Activated naive CD8-positive, alpha-beta T cell treated with anti-CD3 and anti-CD28 coated beads, Interleukin-2, amount 10 ng/mL, durations not matched to agents 7 days and 5 days (primary cell): ENCODE measurements at regions of chr3 and their contacts with region 1.

Region 1: GRCh38 chr3:112990672-112991602 is at the start of gene GTPBP8:
- DNase-seq: peak; percentile 86
- ATAC-seq: peak; percentile 94
- H3K4me3 Mint-ChIP-seq: peak within 1 kb of the TSS; percentile 94
- H3K27ac Mint-ChIP-seq: peak within 1 kb of the TSS; percentile 98
- H3K4me1 Mint-ChIP-seq: peaks cover 46% of the 10 kb centered on the region
- H3K27me3 Mint-ChIP-seq: peaks cover 1% of the 10 kb centered on the region
- total RNA-seq, gene GTPBP8: 26.5 to 26.6 TPM

Region 2: GRCh38 chr3:112973325-112974177 is 17.4 kb before region 1 on chr3:
- POLR2A ChIA-PET with region 1: interaction called, 12 read pairs
- DNase-seq: no peak
- ATAC-seq: peak; percentile 80
- H3K4me3 Mint-ChIP-seq: peak overlapping the region; percentile 91
- H3K27ac Mint-ChIP-seq: peak overlapping the region; percentile 92
- H3K4me1 Mint-ChIP-seq: peaks cover 40% of the 10 kb centered on the region
- H3K27me3 Mint-ChIP-seq: no peaks in the 10 kb centered on the region

Region 3: DNA sequence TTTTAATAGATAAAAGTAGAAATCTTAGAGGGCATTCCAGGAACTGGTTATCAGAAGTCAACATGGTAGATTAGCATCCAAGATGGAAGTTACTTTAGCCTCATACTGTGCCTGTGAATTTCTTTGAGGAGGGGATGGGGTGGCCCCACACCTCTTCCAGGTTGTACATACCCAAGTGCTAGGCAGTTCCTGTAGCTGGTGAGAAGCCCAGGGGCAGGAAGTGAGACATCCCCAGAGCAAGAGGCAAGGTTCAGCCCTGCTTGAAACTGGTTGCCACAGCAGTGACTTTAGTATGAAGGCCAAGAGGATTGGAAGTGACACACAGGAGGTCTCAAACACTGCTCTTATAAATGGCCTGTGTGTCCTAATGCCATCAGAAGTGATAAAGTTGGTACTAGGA is 11.7 kb after region 1 on chr3:
- POLR2A ChIA-PET with region 1: interaction called, 21 read pairs
- DNase-seq: peak; percentile 33
- ATAC-seq: peak; percentile 91
- H3K4me3 Mint-ChIP-seq: peak overlapping the region; percentile 22
- H3K27ac Mint-ChIP-seq: peak overlapping the region; percentile 85
- H3K4me1 Mint-ChIP-seq: peaks cover 59% of the 10 kb centered on the region
- H3K27me3 Mint-ChIP-seq: no peaks in the 10 kb centered on the region

Region 4: DNA sequence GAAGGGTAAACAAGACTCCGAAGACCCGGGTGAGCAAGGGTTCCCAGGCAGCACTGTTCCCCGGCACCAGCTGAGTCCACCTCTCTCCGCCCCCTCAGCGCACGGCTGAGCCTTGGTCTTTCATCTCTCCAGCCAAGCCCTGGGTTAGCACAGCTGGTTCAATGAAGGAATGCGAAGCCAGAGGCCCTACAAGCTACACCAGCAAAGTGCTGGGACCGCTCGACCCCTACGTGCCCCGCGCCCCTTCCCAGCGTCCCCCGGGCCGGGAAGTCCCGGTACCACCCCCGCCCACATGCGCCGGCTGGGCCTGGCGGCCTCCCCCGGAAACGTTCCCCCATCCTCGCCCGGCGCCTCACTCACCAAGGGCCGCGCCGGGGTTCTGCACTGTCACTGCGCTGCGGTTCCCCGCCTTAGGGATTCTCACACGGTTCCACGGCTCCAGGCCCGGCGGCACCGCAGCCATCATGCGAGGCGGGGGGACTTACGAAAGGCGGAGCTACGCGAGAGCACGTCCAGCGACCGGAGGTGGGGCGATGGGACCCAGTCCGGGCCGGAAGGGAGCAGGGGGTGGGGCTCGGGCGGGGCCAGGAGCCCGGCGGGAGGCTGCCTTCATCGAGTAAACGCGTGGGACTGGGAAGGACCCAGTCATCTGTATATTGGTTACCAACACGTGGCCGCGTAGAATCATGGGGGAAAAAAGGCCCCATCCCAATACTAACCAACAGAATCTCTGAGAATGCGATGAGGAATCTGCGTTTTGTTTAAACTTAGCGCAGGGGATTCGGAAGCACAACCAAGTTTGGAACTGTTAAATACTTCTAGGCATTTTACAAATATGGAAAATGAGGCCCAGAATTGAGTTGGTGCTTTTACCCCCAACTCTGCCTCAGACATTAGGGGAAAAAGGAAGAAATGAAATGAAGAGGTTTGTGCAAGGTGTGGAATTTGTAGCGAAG is 28.5 kb after region 1 on chr3:
- POLR2A ChIA-PET with region 1: interaction called, 20 read pairs
- DNase-seq: peak; percentile 83
- ATAC-seq: peak; percentile 91
- H3K4me3 Mint-ChIP-seq: peak overlapping the region; percentile 89
- H3K27ac Mint-ChIP-seq: peak overlapping the region; percentile 88
- H3K4me1 Mint-ChIP-seq: peaks cover 31% of the 10 kb centered on the region
- H3K27me3 Mint-ChIP-seq: no peaks in the 10 kb centered on the region

Region 5: DNA sequence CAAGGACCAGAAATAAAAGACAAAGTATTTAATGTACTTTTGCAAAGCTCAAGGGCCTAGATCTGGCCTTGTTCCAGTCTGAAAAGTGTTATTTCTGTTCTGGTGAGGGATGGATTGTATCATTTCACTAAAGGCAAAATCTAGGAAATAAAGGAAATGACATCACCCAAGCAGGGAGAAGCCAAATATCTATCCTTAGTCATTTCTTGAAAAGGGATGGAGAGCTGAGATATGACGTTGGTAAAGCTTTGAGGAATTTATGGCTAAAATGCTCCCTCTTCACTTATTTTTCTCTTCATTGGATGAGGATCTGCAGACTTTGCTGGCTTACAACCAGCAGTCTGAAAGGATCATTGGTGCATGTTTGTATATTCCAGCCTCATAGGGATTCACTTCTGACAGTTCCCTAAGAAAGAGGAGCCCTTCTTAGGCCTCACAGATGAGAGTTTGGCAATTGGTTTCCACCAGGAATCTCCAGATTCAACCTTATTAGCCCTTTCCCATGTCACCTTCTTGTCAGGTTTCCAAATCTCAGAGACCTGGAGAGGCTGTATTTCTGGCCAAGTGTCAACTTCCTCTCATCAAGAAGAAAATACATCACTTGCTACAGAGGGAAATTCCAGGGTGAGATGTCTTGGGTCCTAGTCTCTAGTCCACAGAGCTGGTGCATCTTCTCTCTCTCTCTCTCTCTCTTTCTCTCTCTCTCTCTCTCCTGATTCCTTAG is 126.7 kb after region 1 on chr3:
- POLR2A ChIA-PET with region 1: no interaction called
- DNase-seq: no peak
- ATAC-seq: no peak
- H3K4me3 Mint-ChIP-seq: no peak overlapping the region
- H3K27ac Mint-ChIP-seq: no peak overlapping the region
- H3K4me1 Mint-ChIP-seq: no peaks in the 10 kb centered on the region
- H3K27me3 Mint-ChIP-seq: no peaks in the 10 kb centered on the region